ENCODE measurements at regions of chr9 and their contacts with region 1.

Region 1: GRCh38 chr9:113807173-113808061 is 68.7 kb upstream of the ZNF618 start:
- DNase-seq: peak; percentile 59
- H3K4me3 ChIP-seq: no peak overlapping the region
- H3K27ac ChIP-seq: no peak overlapping the region
- H3K4me1 ChIP-seq: no peaks in the 10 kb centered on the region
- H3K27me3 ChIP-seq: no peaks in the 10 kb centered on the region
- CTCF ChIP-seq: peak; percentile 77

Region 2: DNA sequence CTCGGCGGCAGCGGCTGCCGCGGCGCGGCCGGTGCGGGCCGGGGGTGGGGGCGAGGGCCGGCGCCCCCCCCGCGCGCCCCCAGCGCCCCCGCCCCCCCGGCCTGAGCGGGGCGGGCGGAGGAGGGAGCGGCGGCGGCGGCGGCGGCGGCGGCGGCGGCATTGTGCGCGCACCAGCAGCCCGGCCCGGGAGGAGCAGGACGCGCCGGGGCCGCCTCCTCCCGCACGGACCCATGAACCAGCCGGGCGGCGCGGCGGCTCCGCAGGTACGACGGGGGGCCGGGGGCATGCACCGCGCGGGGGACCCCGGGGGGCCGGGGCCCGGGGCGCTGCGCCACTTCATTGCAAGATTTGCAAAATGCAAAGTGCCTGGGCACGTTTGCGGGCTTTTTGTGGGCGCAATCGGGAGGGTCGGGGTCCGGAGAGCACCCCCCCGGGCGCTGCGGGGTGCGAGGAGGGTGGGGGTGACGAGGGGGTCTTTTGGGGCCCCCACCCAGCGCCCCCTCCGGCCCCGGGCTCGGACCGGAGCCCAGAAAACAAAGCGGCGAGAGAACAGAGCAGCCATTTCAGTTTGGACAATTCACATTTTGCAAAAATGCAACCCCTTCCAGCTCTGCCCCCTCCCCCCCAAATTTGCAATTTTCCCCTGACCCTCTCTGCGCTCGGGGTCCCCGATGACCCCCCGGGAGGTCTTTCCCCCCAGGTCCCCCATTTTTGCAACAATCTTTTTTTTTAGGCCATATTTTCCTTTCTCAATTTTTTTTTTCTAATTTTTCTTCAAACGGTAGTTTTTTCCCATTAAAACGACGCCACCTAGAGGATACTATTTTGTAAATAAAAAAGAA is 69.0 kb after region 1 on chr9 and contains the start of gene ZNF618:
- intact Hi-C with region 1: loop called (anchors 5 kb)
- DNase-seq: no peak
- H3K4me3 ChIP-seq: peak within 1 kb of the TSS; percentile 75
- H3K27ac ChIP-seq: no peak within 1 kb of the TSS
- H3K4me1 ChIP-seq: no peaks in the 10 kb centered on the region
- H3K27me3 ChIP-seq: no peaks in the 10 kb centered on the region
- CTCF ChIP-seq: no peak
- total RNA-seq, gene ZNF618: 3.1 to 3.3 TPM

Region 3: GRCh38 chr9:113963017-113963620 is 155.7 kb after region 1 on chr9:
- intact Hi-C with region 1: loop called (anchors 10 kb)
- DNase-seq: peak; percentile 58
- H3K4me3 ChIP-seq: no peak overlapping the region
- H3K27ac ChIP-seq: no peak overlapping the region
- H3K4me1 ChIP-seq: no peaks in the 10 kb centered on the region
- H3K27me3 ChIP-seq: no peaks in the 10 kb centered on the region
- CTCF ChIP-seq: peak; percentile 73

Region 4: DNA sequence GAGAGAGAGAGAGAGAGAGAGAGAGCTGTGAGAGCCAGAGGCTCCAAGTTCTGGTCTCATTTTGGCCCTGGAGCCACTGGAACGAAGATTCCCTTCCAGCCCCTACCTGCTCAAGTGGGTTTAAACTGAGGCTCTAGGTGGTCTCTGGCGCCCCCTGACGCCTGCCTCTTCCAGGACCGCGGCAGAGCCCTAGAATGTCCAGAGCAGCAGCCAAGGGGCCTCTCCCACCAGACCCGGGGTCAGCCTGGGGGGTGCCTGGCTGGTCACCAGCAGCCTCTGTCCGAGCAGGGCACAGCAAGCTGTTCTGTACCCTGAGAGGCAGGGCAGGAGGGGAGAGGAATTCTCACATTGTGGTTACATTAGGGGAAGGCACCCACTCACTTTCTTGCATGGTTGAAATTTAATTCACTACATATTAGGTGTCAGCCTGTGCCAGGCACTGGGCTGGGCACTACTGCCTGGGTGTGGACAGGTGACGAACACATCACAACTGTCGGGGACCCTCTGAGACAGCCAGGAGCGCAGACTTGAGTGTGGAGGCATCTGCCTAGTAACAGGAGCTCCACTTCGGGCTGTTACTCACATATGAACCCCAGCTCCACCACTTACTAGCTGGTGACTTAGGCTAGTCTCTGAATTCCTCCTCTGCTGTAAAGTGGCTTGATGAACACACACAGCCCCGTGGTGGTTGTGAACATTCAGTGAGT is 226.1 kb after region 1 on chr9:
- intact Hi-C with region 1: loop called (anchors 10 kb)
- DNase-seq: peak; percentile 20
- H3K4me3 ChIP-seq: no peak overlapping the region
- H3K27ac ChIP-seq: no peak overlapping the region
- H3K4me1 ChIP-seq: no peaks in the 10 kb centered on the region
- H3K27me3 ChIP-seq: no peaks in the 10 kb centered on the region
- CTCF ChIP-seq: no peak

Region 5: DNA sequence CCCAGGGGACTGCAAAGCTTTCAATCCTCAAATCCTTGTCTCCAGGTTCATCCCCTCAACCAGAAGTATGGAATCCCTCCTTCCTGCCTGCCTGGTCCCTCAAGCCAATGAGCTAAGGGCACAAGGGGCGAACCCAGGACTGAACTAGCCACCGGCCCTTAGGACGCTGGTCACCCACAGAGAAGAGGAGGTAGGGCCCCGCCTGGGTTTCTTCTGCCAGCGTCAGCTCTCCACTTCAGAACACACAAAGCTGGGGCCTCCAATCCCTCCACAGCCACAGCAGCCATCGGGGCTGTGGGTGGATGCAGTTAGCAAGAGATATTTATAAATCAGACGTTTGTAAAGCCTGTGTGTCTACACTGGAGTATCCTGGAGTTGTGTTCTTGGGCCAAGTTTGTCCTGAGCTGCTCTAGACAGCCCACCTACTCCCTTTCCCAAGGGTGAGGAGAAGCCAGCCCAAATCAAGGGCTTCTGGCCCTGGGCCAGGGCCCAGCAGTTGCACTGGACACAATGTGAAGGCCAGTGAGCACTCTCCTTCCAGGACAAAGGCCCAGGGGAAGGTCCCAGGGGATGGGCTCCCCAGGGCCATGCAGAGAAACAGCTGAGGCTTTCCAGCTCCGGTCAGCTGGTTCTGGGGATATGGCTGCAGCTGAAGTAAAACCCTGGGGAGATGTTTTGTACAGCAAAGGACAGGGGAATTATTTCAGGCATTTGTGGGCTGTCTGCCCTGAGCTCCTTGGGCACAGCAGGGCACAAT is 251.8 kb after region 1 on chr9:
- intact Hi-C with region 1: no loop called
- DNase-seq: peak; percentile 16
- H3K4me3 ChIP-seq: no peak overlapping the region
- H3K27ac ChIP-seq: no peak overlapping the region
- H3K4me1 ChIP-seq: no peaks in the 10 kb centered on the region
- H3K27me3 ChIP-seq: no peaks in the 10 kb centered on the region
- CTCF ChIP-seq: no peak